ENCODE measurements at regions of chr21 and their contacts with region 1.

Region 1: GRCh38 chr21:33127154-33127893 is 57.4 kb downstream of the OLIG1 start:
- DNase-seq: peak; percentile 48
- ATAC-seq: peak; percentile 96
- H3K4me3 ChIP-seq: peak overlapping the region; percentile 44 to 57
- H3K27ac ChIP-seq: no peak overlapping the region
- H3K4me1 ChIP-seq: peaks cover 0 to 5% of the 10 kb centered on the region in 2 experiments; a peak in 1 of 4 replicates
- H3K27me3 ChIP-seq: peaks cover 4% of the 10 kb centered on the region; the same call in 1 of the 2 replicates
- CTCF ChIP-seq: peak; percentile 95 to 98 (median 96)
- POLR2A ChIP-seq: no peak
- RAD21 ChIP-seq: peak; percentile 89

Region 2: GRCh38 chr21:31198575-31198974 is 1928.7 kb before region 1 on chr21:
- CTCF ChIA-PET with region 1: no interaction called
- POLR2A ChIA-PET with region 1: no interaction called
- RAD21 ChIA-PET with region 1: no interaction called
- intact Hi-C with region 1: no loop called
- DNase-seq: peak; percentile 48
- ATAC-seq: peak; percentile 76
- H3K4me3 ChIP-seq: no peak overlapping the region
- H3K27ac ChIP-seq: no peak overlapping the region
- H3K4me1 ChIP-seq: peaks cover 13% of the 10 kb centered on the region in 2 experiments
- H3K27me3 ChIP-seq: no peaks in the 10 kb centered on the region
- CTCF ChIP-seq: peak; percentile 48 to 71 (median 62); a peak in 5 of 6 replicates
- POLR2A ChIP-seq: no peak
- RAD21 ChIP-seq: peak; percentile 78

Region 3: GRCh38 chr21:32653311-32653901 is 473.9 kb before region 1 on chr21:
- CTCF ChIA-PET with region 1: no interaction called
- POLR2A ChIA-PET with region 1: no interaction called
- RAD21 ChIA-PET with region 1: no interaction called
- intact Hi-C with region 1: loop called (anchors 2 kb)
- DNase-seq: peak; percentile 15
- ATAC-seq: peak; percentile 86
- H3K4me3 ChIP-seq: no peak overlapping the region
- H3K27ac ChIP-seq: no peak overlapping the region
- H3K4me1 ChIP-seq: no peaks in the 10 kb centered on the region
- H3K27me3 ChIP-seq: no peaks in the 10 kb centered on the region
- CTCF ChIP-seq: peak; percentile 36 to 84 (median 78); a peak in 4 of 6 replicates
- POLR2A ChIP-seq: no peak
- RAD21 ChIP-seq: peak; percentile 69

Region 4: DNA sequence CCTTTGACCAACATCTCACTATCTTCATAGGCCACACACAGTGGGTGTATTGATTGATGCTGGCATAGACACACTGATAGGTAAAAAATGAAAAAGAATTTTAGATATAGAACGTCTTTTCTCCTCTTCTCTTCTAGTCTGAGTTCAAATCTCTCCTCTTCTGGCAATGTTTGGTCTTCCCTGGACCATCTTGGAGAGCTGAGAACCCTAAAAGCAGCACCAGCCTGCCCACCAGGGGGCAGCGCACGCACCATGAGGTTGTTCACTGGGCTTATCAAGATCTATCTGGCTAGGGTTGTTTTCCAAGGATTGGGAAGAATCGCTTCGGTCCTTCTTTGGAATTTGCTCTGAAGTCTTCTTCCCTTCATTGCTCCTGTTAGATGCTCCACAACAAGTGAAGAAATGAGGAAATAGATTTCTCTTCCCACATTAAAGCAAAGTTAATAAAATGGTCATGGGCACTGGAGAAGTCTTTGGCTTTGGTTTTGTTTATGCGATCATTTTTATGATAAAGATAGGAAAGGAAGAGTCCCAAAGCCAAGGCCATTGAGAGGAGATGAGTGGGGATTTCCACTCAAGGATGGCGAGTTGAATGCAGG is 205.6 kb before region 1 on chr21:
- CTCF ChIA-PET with region 1: interaction called, 4 read pairs
- POLR2A ChIA-PET with region 1: no interaction called
- RAD21 ChIA-PET with region 1: no interaction called
- intact Hi-C with region 1: loop called (anchors 5 kb)
- DNase-seq: peak; percentile 29
- ATAC-seq: peak; percentile 82
- H3K4me3 ChIP-seq: no peak overlapping the region
- H3K27ac ChIP-seq: no peak overlapping the region
- H3K4me1 ChIP-seq: no peaks in the 10 kb centered on the region
- H3K27me3 ChIP-seq: 0 out of 2 replicates have a peak, but pooled peaks cover 13% of the 10 kb centered on the region
- CTCF ChIP-seq: peak; percentile 15 to 82 (median 82); a peak in 5 of 6 replicates
- POLR2A ChIP-seq: no peak
- RAD21 ChIP-seq: 0 out of 2 replicates have a peak, but pooled peaks have one; percentile 20

Region 5: DNA sequence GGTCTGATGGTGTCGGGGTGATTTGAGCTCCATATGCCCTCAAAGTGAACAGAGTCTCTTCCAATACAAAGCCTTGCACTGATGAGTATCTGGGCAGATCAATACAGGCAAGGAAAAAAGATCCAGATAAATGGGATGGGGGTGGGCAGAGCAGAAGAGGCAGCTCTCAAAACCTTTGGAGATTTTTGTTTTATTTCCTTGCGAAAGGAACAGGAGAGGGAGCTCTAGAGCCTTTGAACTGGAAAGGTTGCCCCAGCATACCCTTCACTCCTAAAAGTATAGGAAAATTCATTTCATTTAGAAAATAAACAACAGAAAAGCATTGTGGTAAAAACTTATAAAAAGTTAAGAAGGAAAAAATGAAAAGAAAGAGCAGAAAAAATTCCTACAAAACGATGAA is 133.0 kb before region 1 on chr21:
- CTCF ChIA-PET with region 1: interaction called, 20 read pairs
- POLR2A ChIA-PET with region 1: no interaction called
- RAD21 ChIA-PET with region 1: interaction called, 3 to 7 read pairs
- intact Hi-C with region 1: loop called (anchors 1 kb)
- DNase-seq: no peak
- ATAC-seq: peak; percentile 77
- H3K4me3 ChIP-seq: no peak overlapping the region
- H3K27ac ChIP-seq: no peak overlapping the region
- H3K4me1 ChIP-seq: no peaks in the 10 kb centered on the region
- H3K27me3 ChIP-seq: peaks cover 34% of the 10 kb centered on the region
- CTCF ChIP-seq: peak; percentile 47 to 69 (median 58); a peak in 4 of 6 replicates
- POLR2A ChIP-seq: no peak
- RAD21 ChIP-seq: peak; percentile 65

Region 6: GRCh38 chr21:33033094-33033951 is 94.0 kb before region 1 on chr21:
- CTCF ChIA-PET with region 1: no interaction called
- POLR2A ChIA-PET with region 1: no interaction called
- RAD21 ChIA-PET with region 1: no interaction called
- intact Hi-C with region 1: no loop called
- DNase-seq: no peak
- ATAC-seq: no peak
- H3K4me3 ChIP-seq: no peak overlapping the region
- H3K27ac ChIP-seq: no peak overlapping the region
- H3K4me1 ChIP-seq: peaks cover 0 to 6% of the 10 kb centered on the region in 2 experiments; a peak in 1 of 4 replicates
- H3K27me3 ChIP-seq: peaks cover 12% of the 10 kb centered on the region; the same call in 1 of the 2 replicates
- CTCF ChIP-seq: no peak
- POLR2A ChIP-seq: no peak
- RAD21 ChIP-seq: no peak

Region 7: DNA sequence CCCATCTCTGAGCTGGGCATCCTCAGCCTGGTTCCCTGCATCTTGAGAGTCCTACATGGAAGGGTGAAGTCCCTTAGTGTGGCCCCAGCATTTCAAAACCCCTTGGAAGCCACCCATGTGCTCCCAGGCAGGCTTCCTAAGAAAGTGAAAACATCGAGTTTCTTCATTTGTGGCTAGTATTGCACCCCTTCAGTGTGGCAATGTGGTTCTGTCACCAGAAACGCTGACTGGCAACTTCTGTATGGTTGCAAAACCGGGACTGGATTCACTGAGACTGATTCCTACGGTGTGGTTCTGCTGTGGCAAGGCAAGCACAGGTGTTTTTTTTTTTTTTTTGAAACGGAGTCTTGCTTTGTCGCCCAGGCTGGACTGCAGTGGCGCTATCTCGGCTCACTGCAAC is 266.9 kb after region 1 on chr21:
- CTCF ChIA-PET with region 1: no interaction called
- POLR2A ChIA-PET with region 1: no interaction called
- RAD21 ChIA-PET with region 1: no interaction called
- intact Hi-C with region 1: no loop called
- DNase-seq: no peak
- ATAC-seq: no peak
- H3K4me3 ChIP-seq: no peak overlapping the region
- H3K27ac ChIP-seq: no peak overlapping the region
- H3K4me1 ChIP-seq: peaks cover 3 to 6% of the 10 kb centered on the region in 2 experiments; a peak in 2 of 4 replicates
- H3K27me3 ChIP-seq: no peaks in the 10 kb centered on the region
- CTCF ChIP-seq: no peak
- POLR2A ChIP-seq: no peak
- RAD21 ChIP-seq: no peak

Region 8: GRCh38 chr21:33449616-33450015 is 322.3 kb after region 1 on chr21:
- CTCF ChIA-PET with region 1: interaction called, 6 read pairs
- POLR2A ChIA-PET with region 1: no interaction called
- RAD21 ChIA-PET with region 1: no interaction called
- intact Hi-C with region 1: loop called (anchors 5 kb)
- DNase-seq: no peak
- ATAC-seq: no peak
- H3K4me3 ChIP-seq: no peak overlapping the region
- H3K27ac ChIP-seq: no peak overlapping the region
- H3K4me1 ChIP-seq: peaks cover 3 to 6% of the 10 kb centered on the region in 2 experiments; a peak in 1 of 4 replicates
- H3K27me3 ChIP-seq: no peaks in the 10 kb centered on the region
- CTCF ChIP-seq: no peak
- POLR2A ChIP-seq: no peak
- RAD21 ChIP-seq: no peak

Measured in HCT116 (cell line).